HepG2 (cell line): ENCODE measurements at regions of chr5 and their contacts with region 1.

Region 1: DNA sequence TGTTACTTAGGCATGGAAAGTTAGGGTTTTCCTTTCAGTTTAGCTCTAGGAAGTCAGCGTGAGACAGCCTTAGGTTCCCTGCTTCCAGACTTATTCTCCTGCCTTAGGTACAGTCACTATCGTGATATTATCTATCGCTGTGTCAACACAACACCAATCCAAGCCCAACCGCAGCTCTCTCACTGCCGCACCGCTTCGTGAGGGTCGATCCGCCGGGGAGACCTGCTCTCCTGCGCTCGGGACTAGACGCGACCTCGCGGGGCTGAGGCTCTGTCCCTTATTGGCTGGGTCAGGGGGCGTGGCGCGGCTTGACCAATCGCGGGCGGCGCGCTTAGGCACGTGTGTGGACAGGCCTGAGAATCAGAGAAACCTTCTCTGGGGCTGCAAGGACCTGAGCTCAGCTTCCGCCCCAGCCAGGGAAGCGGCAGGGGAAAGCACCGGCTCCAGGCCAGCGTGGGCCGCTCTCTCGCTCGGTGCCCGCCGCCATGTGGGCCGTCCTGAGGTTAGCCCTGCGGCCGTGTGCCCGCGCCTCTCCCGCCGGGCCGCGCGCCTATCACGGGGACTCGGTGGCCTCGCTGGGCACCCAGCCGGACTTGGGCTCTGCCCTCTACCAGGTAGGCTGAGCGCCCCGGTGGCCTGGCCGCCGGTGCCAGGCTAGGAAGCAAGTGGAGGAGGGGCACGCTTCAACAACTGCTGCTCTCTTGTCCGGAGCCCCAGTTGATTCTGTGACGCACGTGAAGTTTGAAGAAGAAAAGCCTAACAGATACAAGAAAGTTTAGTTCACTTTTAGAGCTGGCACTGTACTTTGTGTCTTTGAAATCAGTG is at the start of gene MCCC2:
- DNase-seq: peak; percentile 96
- ATAC-seq: peak; percentile 97
- H3K4me3 ChIP-seq: peak within 1 kb of the TSS; percentile 74 to 76 (median 76)
- H3K27ac ChIP-seq: peak within 1 kb of the TSS; percentile 98
- H3K4me1 ChIP-seq: peaks cover 42% of the 10 kb centered on the region
- H3K27me3 ChIP-seq: no peaks in the 10 kb centered on the region; a peak in 1 of 5 replicates
- CTCF ChIP-seq: no peak
- EP300 ChIP-seq: peak; percentile 4 to 41; a peak in 1 of 4 replicates
- POLR2A ChIP-seq: peak; percentile 95 to 96
- RAD21 ChIP-seq: peak; percentile 68
- total RNA-seq, gene MCCC2: 83.6 and 133 TPM in 2 replicates

Region 2: DNA sequence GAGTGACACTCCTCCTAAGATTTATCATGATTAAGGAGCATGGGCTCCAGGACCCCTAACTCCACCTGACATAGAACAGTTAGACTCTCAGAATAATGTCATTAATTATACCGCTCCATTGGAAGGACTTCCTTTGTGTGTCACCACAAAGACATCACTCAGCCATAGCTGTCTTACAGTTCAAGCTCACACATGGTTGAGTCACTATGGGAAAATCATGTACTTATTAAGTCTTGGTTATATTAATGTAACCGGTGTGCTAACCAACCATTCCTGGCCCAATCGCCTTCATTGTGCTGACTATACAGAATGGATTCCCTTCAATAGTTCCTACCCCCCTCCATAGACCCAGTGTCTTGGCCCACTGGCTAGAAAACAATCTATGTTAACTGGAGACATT is 10.9 kb before region 1 on chr5:
- CTCF ChIA-PET with region 1: no interaction called
- POLR2A ChIA-PET with region 1: interaction called, 12 read pairs
- in situ Hi-C with region 1: no loop called
- intact Hi-C with region 1: no loop called
- DNase-seq: no peak
- ATAC-seq: no peak
- H3K4me3 ChIP-seq: no peak overlapping the region
- H3K27ac ChIP-seq: no peak overlapping the region
- H3K4me1 ChIP-seq: peaks cover 14% of the 10 kb centered on the region
- H3K27me3 ChIP-seq: no peaks in the 10 kb centered on the region
- CTCF ChIP-seq: no peak
- EP300 ChIP-seq: no peak
- POLR2A ChIP-seq: no peak
- RAD21 ChIP-seq: no peak

Region 3: GRCh38 chr5:71601222-71602041 is 14.3 kb after region 1 on chr5:
- CTCF ChIA-PET with region 1: no interaction called
- POLR2A ChIA-PET with region 1: interaction called, 24 read pairs
- in situ Hi-C with region 1: no loop called
- intact Hi-C with region 1: no loop called
- DNase-seq: peak; percentile 74
- ATAC-seq: peak; percentile 100
- H3K4me3 ChIP-seq: no peak overlapping the region
- H3K27ac ChIP-seq: no peak overlapping the region
- H3K4me1 ChIP-seq: no peaks in the 10 kb centered on the region
- H3K27me3 ChIP-seq: no peaks in the 10 kb centered on the region
- CTCF ChIP-seq: peak; percentile 59
- EP300 ChIP-seq: no peak
- POLR2A ChIP-seq: no peak
- RAD21 ChIP-seq: no peak

Region 4: GRCh38 chr5:71697967-71698366 is 110.8 kb after region 1 on chr5:
- CTCF ChIA-PET with region 1: no interaction called
- POLR2A ChIA-PET with region 1: interaction called, 18 read pairs
- in situ Hi-C with region 1: no loop called
- intact Hi-C with region 1: no loop called
- DNase-seq: peak; percentile 7
- ATAC-seq: no peak
- H3K4me3 ChIP-seq: no peak overlapping the region
- H3K27ac ChIP-seq: no peak overlapping the region
- H3K4me1 ChIP-seq: peaks cover 35% of the 10 kb centered on the region
- H3K27me3 ChIP-seq: peaks cover 0 to 2% of the 10 kb centered on the region in 2 experiments; a peak in 1 of 5 replicates
- CTCF ChIP-seq: peak; percentile 61
- EP300 ChIP-seq: no peak
- POLR2A ChIP-seq: no peak
- RAD21 ChIP-seq: no peak